ENCODE measurements at regions of chr1 and their contacts with region 1.

Region 1: DNA sequence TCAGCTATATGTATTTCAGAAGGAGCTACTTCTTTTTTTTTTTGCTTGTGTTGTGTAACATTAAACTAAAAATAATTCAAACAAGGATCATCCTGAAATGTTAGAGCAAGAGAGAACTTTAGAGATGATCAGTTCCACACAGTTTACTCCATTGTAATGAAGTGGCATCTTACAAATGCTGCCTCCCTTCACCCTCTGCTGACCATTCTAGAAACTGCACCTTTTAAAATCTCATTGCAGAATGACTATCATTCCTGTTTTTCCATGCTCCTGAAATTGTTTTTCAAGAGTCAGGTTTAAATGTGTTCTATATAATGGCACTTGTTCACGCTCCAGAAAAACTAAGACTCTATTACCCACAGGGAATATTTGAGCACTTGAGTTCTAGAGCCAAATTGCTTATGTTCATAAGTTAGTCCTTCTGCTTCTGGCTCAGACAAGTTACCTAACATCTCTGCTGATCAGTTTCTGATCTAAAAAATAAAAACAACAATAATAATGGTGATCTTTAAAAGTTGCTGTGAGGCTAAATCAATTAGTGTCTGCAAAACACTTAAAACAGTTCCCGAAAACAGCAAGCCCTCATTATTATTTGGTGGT is 21.5 kb upstream of the SLC44A5 start:
- DNase-seq: no peak
- ATAC-seq: no peak
- H3K4me3 ChIP-seq: no peak overlapping the region
- H3K27ac ChIP-seq: no peak overlapping the region
- H3K4me1 ChIP-seq: no peaks in the 10 kb centered on the region
- H3K27me3 ChIP-seq: no peaks in the 10 kb centered on the region
- CTCF ChIP-seq: peak; percentile 15 to 60 (median 39)
- POLR2A ChIP-seq: no peak

Region 2: GRCh38 chr1:75233302-75233929 is 399.0 kb before region 1 on chr1:
- in situ Hi-C with region 1: loop called in 1 of 4 experiments (anchors 25 kb)
- intact Hi-C with region 1: no loop called
- DNase-seq: no peak
- ATAC-seq: peak; percentile 62 to 82
- H3K4me3 ChIP-seq: no peak overlapping the region
- H3K27ac ChIP-seq: no peak overlapping the region
- H3K4me1 ChIP-seq: no peaks in the 10 kb centered on the region
- H3K27me3 ChIP-seq: no peaks in the 10 kb centered on the region
- CTCF ChIP-seq: peak in 3 of 5 experiments; percentile 27 to 65 (median 62)
- POLR2A ChIP-seq: no peak

Region 3: DNA sequence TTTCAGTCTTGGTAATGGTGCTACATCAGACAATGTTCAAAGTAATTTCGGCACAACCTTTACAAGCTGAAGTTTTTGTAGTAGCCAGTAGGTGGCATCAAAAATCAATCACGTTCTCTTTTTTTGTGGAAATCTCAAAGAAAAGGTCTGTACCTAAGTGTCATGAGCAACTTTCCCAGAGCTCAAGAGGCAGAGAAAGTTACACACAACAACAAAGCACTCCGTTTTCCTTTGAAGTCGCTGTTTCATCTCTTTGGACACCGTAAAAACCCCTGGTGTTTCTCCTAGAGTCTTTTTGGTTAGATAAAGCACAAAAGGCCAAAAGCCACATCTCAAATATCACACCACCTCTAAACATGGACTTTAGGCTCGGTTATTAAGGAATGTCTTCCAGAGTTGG is 366.7 kb before region 1 on chr1:
- in situ Hi-C with region 1: loop called in 1 of 4 experiments (anchors 10 kb)
- intact Hi-C with region 1: loop called (anchors 10 kb)
- DNase-seq: no peak
- ATAC-seq: no peak
- H3K4me3 ChIP-seq: no peak overlapping the region
- H3K27ac ChIP-seq: no peak overlapping the region
- H3K4me1 ChIP-seq: peaks cover 0 to 4% of the 10 kb centered on the region in 2 donors
- H3K27me3 ChIP-seq: no peaks in the 10 kb centered on the region
- CTCF ChIP-seq: peak in 4 of 5 experiments; percentile 18 to 55 (median 44)
- POLR2A ChIP-seq: no peak

Region 4: GRCh38 chr1:76343356-76343755 is 710.9 kb after region 1 on chr1:
- in situ Hi-C with region 1: no loop called
- intact Hi-C with region 1: no loop called
- DNase-seq: no peak
- ATAC-seq: no peak
- H3K4me3 ChIP-seq: no peak overlapping the region
- H3K27ac ChIP-seq: no peak overlapping the region
- H3K4me1 ChIP-seq: no peaks in the 10 kb centered on the region
- H3K27me3 ChIP-seq: no peaks in the 10 kb centered on the region
- CTCF ChIP-seq: no peak
- POLR2A ChIP-seq: no peak